Activated T-helper 1 cell treated with anti-CD3 and anti-CD28 coated beads, Interleukin-12 subunit alpha, Interleukin-12 subunit beta, Interleukin-2, Interleukin-4 antibody, amounts not matched to agents 30 ng/mL and 10 ng/mL and 1 ng/mL, durations not matched to agents 14 hours and 24 hours and 36 hours (primary cell): ENCODE measurements at regions of chr21 and their contacts with region 1.

Region 1: GRCh38 chr21:44454747-44455523 is at the start of gene LRRC3:
- DNase-seq: peak; percentile 67
- H3K4me3 Mint-ChIP-seq: peak within 1 kb of the TSS; percentile 81
- H3K27ac Mint-ChIP-seq: peak within 1 kb of the TSS; percentile 16
- H3K4me1 Mint-ChIP-seq: peaks cover 4% of the 10 kb centered on the region
- H3K27me3 Mint-ChIP-seq: peaks cover 28% of the 10 kb centered on the region
- total RNA-seq, gene LRRC3: 1.8 and 1.9 TPM in 2 replicates

Region 2: GRCh38 chr21:43810505-43811261 is 644.3 kb before region 1 on chr21:
- intact Hi-C with region 1: no loop called
- DNase-seq: peak; percentile 84
- H3K4me3 Mint-ChIP-seq: no peak overlapping the region
- H3K27ac Mint-ChIP-seq: peak overlapping the region; percentile 48
- H3K4me1 Mint-ChIP-seq: no peaks in the 10 kb centered on the region
- H3K27me3 Mint-ChIP-seq: peaks cover 1% of the 10 kb centered on the region

Region 3: DNA sequence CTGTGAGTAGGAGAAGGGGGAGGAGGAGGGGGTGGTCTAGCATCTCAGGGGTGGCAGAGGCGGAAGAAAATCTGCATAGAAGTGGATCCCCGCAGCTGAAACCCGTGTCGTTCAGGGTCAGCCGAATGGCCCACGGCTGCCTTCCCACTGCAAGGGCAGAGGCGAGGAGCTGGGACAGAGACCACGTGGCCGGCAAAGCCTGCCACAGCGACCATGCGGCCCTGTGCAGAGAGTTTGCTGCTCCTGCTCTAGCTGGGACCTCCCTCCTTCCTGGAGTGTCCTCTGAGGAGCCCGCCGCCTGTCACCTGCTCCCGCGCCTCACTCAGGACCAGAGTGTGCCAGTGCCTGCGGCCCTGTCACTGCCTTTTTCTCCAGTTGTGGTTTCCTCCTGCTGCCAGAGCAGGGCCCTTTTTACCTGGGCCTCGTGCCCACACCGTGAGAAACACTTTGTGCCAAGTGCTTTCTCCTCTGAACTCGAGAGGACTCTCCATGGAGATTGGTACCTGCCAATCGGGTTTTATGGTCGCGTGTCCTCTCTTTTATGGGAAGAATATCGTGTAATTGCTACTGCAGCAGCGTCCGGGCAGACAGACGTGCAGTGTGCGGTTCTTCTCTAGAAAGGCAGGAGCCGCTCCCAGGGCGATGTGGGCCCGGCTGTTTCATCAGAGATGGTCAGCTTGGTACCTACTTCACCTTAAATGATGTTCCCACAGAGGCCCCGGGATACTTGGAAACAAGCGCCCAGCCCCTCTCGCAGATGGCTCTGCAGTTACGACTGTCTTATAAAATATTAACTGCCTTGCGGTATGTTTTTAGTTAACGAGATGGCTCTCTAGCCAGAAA is 106.8 kb before region 1 on chr21:
- intact Hi-C with region 1: loop called (anchors 10 kb)
- DNase-seq: no peak
- H3K4me3 Mint-ChIP-seq: no peak overlapping the region
- H3K27ac Mint-ChIP-seq: no peak overlapping the region
- H3K4me1 Mint-ChIP-seq: peaks cover 10% of the 10 kb centered on the region
- H3K27me3 Mint-ChIP-seq: peaks cover 23% of the 10 kb centered on the region

Region 4: GRCh38 chr21:44428281-44428942 is 26.5 kb before region 1 on chr21:
- intact Hi-C with region 1: loop called (anchors 1 kb)
- DNase-seq: peak; percentile 49
- H3K4me3 Mint-ChIP-seq: no peak overlapping the region
- H3K27ac Mint-ChIP-seq: no peak overlapping the region
- H3K4me1 Mint-ChIP-seq: no peaks in the 10 kb centered on the region
- H3K27me3 Mint-ChIP-seq: no peaks in the 10 kb centered on the region

Region 5: GRCh38 chr21:44478124-44478800 is 23.3 kb after region 1 on chr21:
- intact Hi-C with region 1: loop called (anchors 1 kb)
- DNase-seq: no peak
- H3K4me3 Mint-ChIP-seq: no peak overlapping the region
- H3K27ac Mint-ChIP-seq: no peak overlapping the region
- H3K4me1 Mint-ChIP-seq: peaks cover 12% of the 10 kb centered on the region
- H3K27me3 Mint-ChIP-seq: peaks cover 3% of the 10 kb centered on the region

Region 6: DNA sequence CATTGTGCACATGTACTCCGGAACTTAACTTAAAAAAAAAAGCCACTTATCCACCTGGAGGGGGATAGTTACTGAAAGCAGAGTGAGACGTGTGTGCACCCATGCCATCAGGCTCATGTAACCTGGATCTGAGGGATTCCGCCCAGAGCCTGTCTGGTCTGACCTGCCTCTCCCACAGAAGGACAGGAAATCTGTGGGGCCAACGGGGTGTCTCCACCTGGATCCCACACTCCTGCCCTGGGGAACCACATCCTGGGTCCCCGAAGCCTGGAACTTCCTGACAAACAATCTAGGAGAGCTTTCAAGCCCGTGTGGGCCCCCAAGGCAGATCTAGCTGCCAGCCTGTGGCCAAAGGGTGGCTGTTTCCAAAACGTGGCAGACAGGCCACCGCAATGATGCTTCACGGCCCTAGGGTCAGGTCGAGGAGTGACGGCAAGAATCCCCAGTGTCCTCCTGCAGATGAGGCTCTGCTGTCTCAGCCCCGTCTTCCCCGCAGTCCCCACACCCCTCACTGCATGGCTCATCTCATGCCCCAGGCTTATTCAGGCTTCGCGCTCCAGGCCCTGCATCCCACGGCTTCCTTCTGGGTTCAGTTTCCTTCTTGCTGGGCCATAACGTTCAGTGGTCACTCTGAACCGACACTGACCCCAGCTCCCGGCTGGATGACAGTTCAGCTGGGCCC is 1167.6 kb after region 1 on chr21:
- intact Hi-C with region 1: no loop called
- DNase-seq: no peak
- H3K4me3 Mint-ChIP-seq: no peak overlapping the region
- H3K27ac Mint-ChIP-seq: no peak overlapping the region
- H3K4me1 Mint-ChIP-seq: no peaks in the 10 kb centered on the region
- H3K27me3 Mint-ChIP-seq: peaks cover 17% of the 10 kb centered on the region